ENCODE measurements at regions of chr5 and their contacts with region 1.

Region 1: GRCh38 chr5:151924564-151925301 is at the start of gene GLRA1:
- DNase-seq: no peak
- ATAC-seq: no peak
- H3K4me3 ChIP-seq: no peak within 1 kb of the TSS
- H3K27ac ChIP-seq: no peak within 1 kb of the TSS
- H3K4me1 ChIP-seq: no peaks in the 10 kb centered on the region; the same call in 1 of the 2 replicates
- H3K27me3 ChIP-seq: peaks cover 4% of the 10 kb centered on the region; the same call in 1 of the 2 replicates
- CTCF ChIP-seq: no peak
- total RNA-seq, gene GLRA1: not detected

Region 2: DNA sequence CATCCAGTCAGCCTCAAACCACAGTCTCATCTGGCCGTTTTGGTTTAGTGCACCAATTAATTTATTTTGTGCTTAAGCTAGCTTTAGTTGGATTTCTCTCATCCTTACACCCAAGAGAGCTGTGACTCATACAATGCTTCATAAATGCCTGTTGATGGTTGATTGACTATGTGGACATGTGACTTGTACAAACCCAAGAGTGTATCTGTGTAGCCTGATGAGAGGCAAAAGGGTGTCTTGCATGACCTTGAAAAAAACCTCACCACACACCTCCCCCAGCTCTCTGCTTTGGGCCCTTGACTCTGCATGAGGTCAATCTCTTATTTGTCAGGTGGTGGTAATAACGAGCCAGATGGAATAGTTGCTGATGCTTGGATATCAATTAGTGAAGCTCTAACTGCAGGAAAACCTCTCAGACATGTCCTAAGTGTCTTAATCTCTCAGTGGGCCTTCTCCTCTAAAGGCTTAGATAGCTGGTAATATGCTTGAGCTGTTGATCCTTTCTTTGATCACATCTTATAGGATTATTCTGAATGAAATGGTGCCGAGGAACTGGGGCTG is 10.5 kb after region 1 on chr5:
- CTCF ChIA-PET with region 1: no interaction called
- POLR2A ChIA-PET with region 1: no interaction called
- in situ Hi-C with region 1: no loop called
- intact Hi-C with region 1: no loop called
- DNase-seq: no peak
- ATAC-seq: no peak
- H3K4me3 ChIP-seq: no peak overlapping the region
- H3K27ac ChIP-seq: no peak overlapping the region
- H3K4me1 ChIP-seq: no peaks in the 10 kb centered on the region
- H3K27me3 ChIP-seq: no peaks in the 10 kb centered on the region
- CTCF ChIP-seq: no peak

Region 3: GRCh38 chr5:152142840-152143469 is 218.2 kb after region 1 on chr5:
- CTCF ChIA-PET with region 1: no interaction called
- POLR2A ChIA-PET with region 1: no interaction called
- in situ Hi-C with region 1: no loop called
- intact Hi-C with region 1: loop called (anchors 10 kb)
- DNase-seq: peak; percentile 39
- ATAC-seq: peak; percentile 90
- H3K4me3 ChIP-seq: no peak overlapping the region
- H3K27ac ChIP-seq: no peak overlapping the region
- H3K4me1 ChIP-seq: no peaks in the 10 kb centered on the region
- H3K27me3 ChIP-seq: no peaks in the 10 kb centered on the region
- CTCF ChIP-seq: peak; percentile 92

Region 4: GRCh38 chr5:152288499-152288898 is 363.8 kb after region 1 on chr5:
- CTCF ChIA-PET with region 1: interaction called, 5 read pairs
- POLR2A ChIA-PET with region 1: no interaction called
- in situ Hi-C with region 1: no loop called
- intact Hi-C with region 1: loop called (anchors 10 kb)
- DNase-seq: no peak
- ATAC-seq: no peak
- H3K4me3 ChIP-seq: no peak overlapping the region
- H3K27ac ChIP-seq: no peak overlapping the region
- H3K4me1 ChIP-seq: no peaks in the 10 kb centered on the region
- H3K27me3 ChIP-seq: no peaks in the 10 kb centered on the region
- CTCF ChIP-seq: no peak

Measured in Panc1 (cell line).